PC-3 (cell line): ENCODE measurements at regions of chr10 and their contacts with region 1.

Region 1: GRCh38 chr10:24209946-24210491 is 1.1 kb downstream of the KIAA1217 start:
- DNase-seq: peak; percentile 72
- ATAC-seq: peak; percentile 39
- H3K4me3 ChIP-seq: peak overlapping the region; percentile 68
- H3K27ac ChIP-seq: peak overlapping the region; percentile 98
- H3K4me1 ChIP-seq: peaks cover 33% of the 10 kb centered on the region
- H3K27me3 ChIP-seq: no peaks in the 10 kb centered on the region
- CTCF ChIP-seq: no peak

Region 2: DNA sequence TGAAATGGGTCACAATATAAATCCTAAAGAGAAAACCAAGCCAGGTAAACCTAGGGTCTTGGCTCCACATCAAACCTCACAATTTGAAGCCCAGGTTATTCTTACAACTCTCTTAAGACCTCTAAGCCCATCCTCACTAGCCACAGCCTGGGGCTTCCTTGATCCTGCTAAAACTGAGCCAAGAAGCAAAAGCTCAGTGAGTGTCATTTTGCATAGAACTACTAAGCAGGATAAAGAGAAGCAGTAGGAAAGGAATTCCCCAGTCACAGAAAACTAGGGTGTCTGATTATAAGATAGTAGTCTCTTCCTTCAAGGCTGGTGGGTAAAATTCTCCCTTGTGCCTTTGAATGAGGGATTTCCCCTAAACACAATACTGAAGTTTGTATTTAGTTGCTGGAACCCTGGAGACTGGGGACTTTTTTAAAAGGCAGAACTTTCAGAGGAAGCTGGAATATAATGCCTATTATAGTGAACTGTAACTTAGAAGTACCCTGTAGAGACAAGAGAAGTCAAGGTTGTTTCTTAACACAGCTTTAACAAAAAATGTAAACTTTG is 197.7 kb before region 1 on chr10:
- CTCF ChIA-PET with region 1: no interaction called
- POLR2A ChIA-PET with region 1: no interaction called
- intact Hi-C with region 1: no loop called
- DNase-seq: no peak
- ATAC-seq: no peak
- H3K4me3 ChIP-seq: no peak overlapping the region
- H3K27ac ChIP-seq: no peak overlapping the region
- H3K4me1 ChIP-seq: no peaks in the 10 kb centered on the region
- H3K27me3 ChIP-seq: 0 out of 2 replicates have a peak, but pooled peaks cover 4% of the 10 kb centered on the region
- CTCF ChIP-seq: no peak

Region 3: GRCh38 chr10:24344279-24344678 is 134.3 kb after region 1 on chr10:
- CTCF ChIA-PET with region 1: no interaction called
- POLR2A ChIA-PET with region 1: interaction called, 3 read pairs
- intact Hi-C with region 1: loop called (anchors 2 kb)
- DNase-seq: peak; percentile 94
- ATAC-seq: peak; percentile 93
- H3K4me3 ChIP-seq: peak overlapping the region; percentile 59; the same call in 1 of the 2 replicates
- H3K27ac ChIP-seq: peak overlapping the region; percentile 92
- H3K4me1 ChIP-seq: peaks cover 38% of the 10 kb centered on the region
- H3K27me3 ChIP-seq: no peaks in the 10 kb centered on the region
- CTCF ChIP-seq: no peak

Region 4: DNA sequence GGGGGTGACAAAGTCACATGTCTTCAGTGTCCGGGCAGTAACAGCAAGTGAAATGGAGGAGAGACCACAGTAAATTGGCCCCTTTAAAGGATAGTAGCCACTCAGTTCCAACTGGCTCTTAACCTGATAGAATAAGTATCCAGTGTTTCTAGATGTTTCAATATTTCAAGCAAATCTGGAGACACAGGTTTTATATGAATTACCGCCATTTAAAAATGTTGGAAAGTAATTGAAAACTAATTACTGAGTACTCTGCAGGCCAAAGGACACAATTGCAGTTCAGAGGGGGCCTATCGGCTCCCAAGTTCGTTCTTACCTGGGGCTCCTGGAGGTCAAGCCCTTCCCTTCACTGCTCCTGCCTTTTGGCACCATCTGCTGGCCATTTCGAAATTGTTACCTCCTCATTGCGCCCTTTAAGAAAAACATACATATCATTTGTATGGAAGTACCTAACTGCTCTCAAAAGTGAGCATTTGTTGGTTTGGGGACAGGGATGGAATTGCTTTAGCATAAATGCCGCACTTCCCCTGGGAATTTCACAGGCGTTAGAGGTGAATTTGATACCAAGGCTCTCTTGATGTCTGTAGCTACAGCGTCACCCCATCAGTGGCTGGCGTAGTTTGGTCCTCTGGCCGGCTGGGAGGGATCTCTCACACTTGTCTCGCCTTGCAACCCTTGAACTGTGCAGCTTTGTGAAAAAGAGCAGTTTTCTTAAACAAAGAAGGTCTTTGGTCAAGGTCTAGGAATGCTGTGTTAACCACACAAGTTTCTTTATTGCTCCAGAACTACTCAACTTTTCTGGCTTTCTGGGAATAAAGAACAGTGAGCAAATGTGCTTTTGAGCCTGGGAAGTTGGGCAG is 293.7 kb after region 1 on chr10:
- CTCF ChIA-PET with region 1: interaction called, 5 read pairs
- POLR2A ChIA-PET with region 1: interaction called, 18 read pairs
- intact Hi-C with region 1: no loop called
- DNase-seq: peak; percentile 69
- ATAC-seq: peak; percentile 55
- H3K4me3 ChIP-seq: no peak overlapping the region
- H3K27ac ChIP-seq: no peak overlapping the region
- H3K4me1 ChIP-seq: no peaks in the 10 kb centered on the region
- H3K27me3 ChIP-seq: no peaks in the 10 kb centered on the region
- CTCF ChIP-seq: peak; percentile 85

Region 5: GRCh38 chr10:24518981-24519597 is 309.1 kb after region 1 on chr10:
- CTCF ChIA-PET with region 1: no interaction called
- POLR2A ChIA-PET with region 1: no interaction called
- intact Hi-C with region 1: loop called (anchors 5 kb)
- DNase-seq: peak; percentile 68
- ATAC-seq: peak; percentile 58; the same call in 1 of the 2 replicates
- H3K4me3 ChIP-seq: no peak overlapping the region
- H3K27ac ChIP-seq: no peak overlapping the region
- H3K4me1 ChIP-seq: no peaks in the 10 kb centered on the region
- H3K27me3 ChIP-seq: no peaks in the 10 kb centered on the region
- CTCF ChIP-seq: peak; percentile 78